ENCODE measurements at regions of chr5 and their contacts with region 1.

Region 1: DNA sequence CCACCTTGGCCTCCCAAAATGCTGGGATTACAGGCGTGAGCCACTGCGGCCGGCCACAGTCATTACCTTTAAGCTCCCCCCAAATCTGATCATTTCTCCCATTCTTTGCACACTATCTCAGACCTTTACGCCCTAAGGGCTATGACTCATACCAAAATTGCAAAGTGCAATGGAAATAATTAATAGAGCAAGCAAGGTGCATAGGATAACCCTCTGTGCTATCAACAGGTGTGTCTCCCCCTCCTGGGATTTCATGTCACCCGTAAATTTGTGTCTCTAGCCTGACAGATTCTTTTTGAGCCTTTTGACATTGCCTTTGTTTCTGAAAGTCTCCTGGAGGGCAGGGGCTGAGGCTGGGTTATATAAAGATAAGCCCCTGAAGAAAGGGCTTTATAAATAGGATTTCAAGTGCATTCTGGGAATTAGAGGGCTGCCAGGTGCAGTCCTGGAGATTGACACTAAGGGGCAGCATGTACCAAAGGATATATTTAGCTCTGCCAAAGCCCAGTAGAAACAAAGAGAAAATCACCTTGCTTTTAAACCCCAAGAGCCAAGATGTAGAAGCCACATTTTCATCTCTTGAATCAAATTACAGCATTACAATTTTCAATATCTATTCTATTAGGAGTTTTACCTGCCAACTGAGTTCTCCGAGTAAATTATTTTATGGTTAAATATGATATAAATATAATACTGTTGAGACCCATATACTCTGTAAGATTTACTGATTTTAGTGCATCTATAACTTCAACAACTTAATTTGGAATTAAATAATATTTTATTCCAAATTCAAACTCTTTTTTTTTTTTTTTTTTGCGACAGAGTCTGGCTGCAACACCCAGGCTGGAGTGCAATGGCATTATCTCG is 18.2 kb downstream of the S100Z start:
- DNase-seq: peak; percentile 73
- ATAC-seq: peak; percentile 88
- H3K4me3 ChIP-seq: no peak overlapping the region
- H3K27ac ChIP-seq: no peak overlapping the region
- H3K4me1 ChIP-seq: peaks cover 2% of the 10 kb centered on the region; the same call in 1 of the 2 replicates
- H3K27me3 ChIP-seq: no peaks in the 10 kb centered on the region
- CTCF ChIP-seq: peak; percentile 89
- POLR2A ChIP-seq: no peak
- RAD21 ChIP-seq: peak; percentile 88

Region 2: DNA sequence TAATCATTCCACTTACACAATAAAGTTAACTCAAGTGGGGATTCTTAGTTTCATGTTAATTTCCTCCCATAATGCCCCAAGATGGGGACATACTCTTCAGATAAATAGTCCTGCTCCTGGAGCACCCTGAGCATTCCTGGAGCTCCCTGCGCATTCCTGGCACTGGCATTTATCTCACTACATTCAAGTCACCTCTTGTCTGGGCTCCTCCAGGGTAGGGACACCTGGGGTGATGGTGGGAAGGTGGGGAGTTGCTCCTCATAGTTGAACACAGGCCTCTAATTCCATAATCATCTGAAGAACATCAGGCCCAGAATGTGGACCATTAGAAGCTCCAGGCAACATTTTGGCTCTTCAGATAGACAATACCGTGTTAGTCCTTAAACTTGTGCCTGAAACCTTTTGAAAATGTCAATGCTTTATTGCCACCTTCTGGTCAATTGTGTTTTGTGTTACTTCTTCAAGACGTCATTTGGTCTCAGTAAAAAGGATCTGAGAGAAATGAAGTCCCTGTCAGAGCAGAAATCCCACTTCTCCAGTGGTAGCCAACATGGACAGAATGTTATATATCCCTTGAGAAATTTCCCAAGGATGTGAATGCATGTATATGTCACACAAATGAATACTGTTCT is 148.0 kb after region 1 on chr5:
- CTCF ChIA-PET with region 1: interaction called, 9 read pairs
- POLR2A ChIA-PET with region 1: no interaction called
- dilution Hi-C with region 1: no loop called
- in situ Hi-C with region 1: loop called (anchors 10 kb)
- intact Hi-C with region 1: loop called (anchors 1 kb)
- DNase-seq: peak; percentile 69
- ATAC-seq: peak; percentile 64
- H3K4me3 ChIP-seq: no peak overlapping the region
- H3K27ac ChIP-seq: no peak overlapping the region
- H3K4me1 ChIP-seq: no peaks in the 10 kb centered on the region
- H3K27me3 ChIP-seq: peaks cover 7% of the 10 kb centered on the region
- CTCF ChIP-seq: peak; percentile 43
- POLR2A ChIP-seq: no peak
- RAD21 ChIP-seq: peak; percentile 53

Region 3: DNA sequence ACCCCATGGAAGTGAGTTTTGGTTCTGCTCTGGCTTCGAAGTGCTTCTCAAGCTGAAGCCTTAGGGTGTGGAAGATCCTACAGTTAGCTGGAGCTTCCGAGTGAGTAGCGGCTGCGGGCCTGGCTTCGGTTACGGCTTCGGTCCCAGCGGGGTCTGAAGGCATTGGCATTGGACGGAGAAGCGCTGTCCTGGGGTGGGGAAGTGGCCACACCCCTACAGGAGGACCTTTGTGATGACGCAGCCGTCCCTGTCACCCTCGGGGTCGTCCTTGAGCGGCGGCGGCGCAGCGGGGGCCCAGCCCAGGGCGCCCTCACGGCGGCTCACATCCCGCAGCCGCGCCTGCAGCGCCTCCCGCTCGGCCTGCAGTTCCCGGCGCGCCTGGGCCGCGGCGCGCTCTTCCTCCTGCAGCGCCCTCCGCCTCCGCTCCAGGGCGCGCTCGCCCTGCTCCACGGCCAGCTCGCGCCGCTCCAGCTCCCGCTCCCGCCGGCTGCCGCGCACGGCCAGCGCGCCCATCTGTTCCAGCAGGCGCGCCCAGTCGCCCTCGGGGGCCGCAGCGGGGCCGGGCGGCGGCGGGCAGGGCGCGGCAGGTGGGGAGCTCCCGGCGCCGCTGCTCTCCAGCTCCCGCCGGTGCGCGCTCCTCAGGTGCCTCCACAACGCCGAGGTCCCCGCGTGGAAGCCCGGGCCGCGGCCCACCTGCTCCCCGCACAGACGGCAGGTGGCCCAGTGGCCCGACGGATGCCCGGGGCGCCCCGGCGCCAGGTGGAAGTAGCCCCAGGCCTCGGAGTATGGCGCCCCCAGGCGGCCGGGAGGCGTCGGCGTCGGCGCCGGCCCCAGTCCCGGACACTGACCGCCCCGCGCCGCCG is 209.1 kb after region 1 on chr5:
- CTCF ChIA-PET with region 1: no interaction called
- POLR2A ChIA-PET with region 1: no interaction called
- dilution Hi-C with region 1: no loop called
- in situ Hi-C with region 1: no loop called
- intact Hi-C with region 1: loop called (anchors 1 kb)
- DNase-seq: peak; percentile 58
- ATAC-seq: peak; percentile 81
- H3K4me3 ChIP-seq: peak overlapping the region; percentile 41
- H3K27ac ChIP-seq: no peak overlapping the region
- H3K4me1 ChIP-seq: no peaks in the 10 kb centered on the region; the same call in 1 of the 2 replicates
- H3K27me3 ChIP-seq: no peaks in the 10 kb centered on the region
- CTCF ChIP-seq: peak; percentile 53
- POLR2A ChIP-seq: no peak
- RAD21 ChIP-seq: peak; percentile 46

Region 4: GRCh38 chr5:77143998-77144836 is 276.2 kb after region 1 on chr5:
- CTCF ChIA-PET with region 1: no interaction called
- POLR2A ChIA-PET with region 1: no interaction called
- dilution Hi-C with region 1: no loop called
- in situ Hi-C with region 1: no loop called
- intact Hi-C with region 1: loop called (anchors 2 kb)
- DNase-seq: peak; percentile 79
- ATAC-seq: peak; percentile 98
- H3K4me3 ChIP-seq: no peak overlapping the region
- H3K27ac ChIP-seq: no peak overlapping the region
- H3K4me1 ChIP-seq: no peaks in the 10 kb centered on the region
- H3K27me3 ChIP-seq: peaks cover 2% of the 10 kb centered on the region; the same call in 1 of the 2 replicates
- CTCF ChIP-seq: peak; percentile 92
- POLR2A ChIP-seq: no peak
- RAD21 ChIP-seq: peak; percentile 95

Region 5: GRCh38 chr5:77239126-77239741 is 371.2 kb after region 1 on chr5:
- CTCF ChIA-PET with region 1: no interaction called
- POLR2A ChIA-PET with region 1: no interaction called
- dilution Hi-C with region 1: no loop called
- in situ Hi-C with region 1: no loop called
- intact Hi-C with region 1: loop called (anchors 10 kb)
- DNase-seq: no peak
- ATAC-seq: no peak
- H3K4me3 ChIP-seq: no peak overlapping the region
- H3K27ac ChIP-seq: no peak overlapping the region
- H3K4me1 ChIP-seq: no peaks in the 10 kb centered on the region
- H3K27me3 ChIP-seq: peaks cover 14% of the 10 kb centered on the region
- CTCF ChIP-seq: peak; percentile 26; the same call in 1 of the 2 replicates
- POLR2A ChIP-seq: no peak
- RAD21 ChIP-seq: peak; percentile 26

Measured in IMR-90 (cell line).